T-cell (primary cell): ENCODE measurements at regions of chr4 and their contacts with region 1.

Region 1: GRCh38 chr4:159725571-159725970 is 622.7 kb downstream of the RAPGEF2 start:
- DNase-seq: no peak
- ATAC-seq: no peak
- H3K4me3 ChIP-seq: no peak overlapping the region
- H3K4me3 Mint-ChIP-seq: no peak overlapping the region
- H3K27ac ChIP-seq: no peak overlapping the region
- H3K27ac Mint-ChIP-seq: no peak overlapping the region
- H3K4me1 ChIP-seq: no peaks in the 10 kb centered on the region
- H3K4me1 Mint-ChIP-seq: no peaks in the 10 kb centered on the region
- H3K27me3 ChIP-seq: no peaks in the 10 kb centered on the region
- H3K27me3 Mint-ChIP-seq: no peaks in the 10 kb centered on the region

Region 2: DNA sequence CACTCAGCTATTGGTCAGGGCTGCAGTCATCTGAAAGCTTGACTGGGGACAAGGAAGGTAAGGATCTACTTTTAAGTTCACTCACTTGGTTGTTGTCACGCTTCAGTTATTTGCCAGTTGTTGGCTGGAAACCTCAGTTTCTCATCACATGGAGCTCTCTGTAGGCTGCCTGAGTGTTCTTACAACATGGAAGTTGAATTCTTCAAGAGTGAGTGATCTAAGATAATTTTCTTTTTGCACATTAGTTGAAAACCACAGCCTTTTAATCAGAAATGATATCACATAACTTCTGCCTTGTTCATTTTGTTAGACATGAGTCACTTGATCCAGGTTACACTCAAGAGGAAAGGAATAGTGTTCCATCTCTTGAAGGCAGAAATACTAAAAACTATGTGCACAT is 70.0 kb before region 1 on chr4:
- CTCF ChIA-PET with region 1: no interaction called
- POLR2A ChIA-PET with region 1: no interaction called
- DNase-seq: no peak
- ATAC-seq: no peak
- H3K4me3 ChIP-seq: no peak overlapping the region
- H3K4me3 Mint-ChIP-seq: no peak overlapping the region
- H3K27ac ChIP-seq: no peak overlapping the region
- H3K27ac Mint-ChIP-seq: no peak overlapping the region
- H3K4me1 ChIP-seq: no peaks in the 10 kb centered on the region
- H3K4me1 Mint-ChIP-seq: no peaks in the 10 kb centered on the region
- H3K27me3 ChIP-seq: no peaks in the 10 kb centered on the region
- H3K27me3 Mint-ChIP-seq: no peaks in the 10 kb centered on the region

Region 3: GRCh38 chr4:160009656-160010493 is 284.3 kb after region 1 on chr4:
- CTCF ChIA-PET with region 1: interaction called in 1 of 2 experiments, 10 read pairs
- POLR2A ChIA-PET with region 1: no interaction called
- DNase-seq: no peak
- ATAC-seq: no peak
- H3K4me3 ChIP-seq: no peak overlapping the region
- H3K4me3 Mint-ChIP-seq: no peak overlapping the region
- H3K27ac ChIP-seq: no peak overlapping the region
- H3K27ac Mint-ChIP-seq: no peak overlapping the region
- H3K4me1 ChIP-seq: no peaks in the 10 kb centered on the region
- H3K4me1 Mint-ChIP-seq: no peaks in the 10 kb centered on the region
- H3K27me3 ChIP-seq: no peaks in the 10 kb centered on the region
- H3K27me3 Mint-ChIP-seq: no peaks in the 10 kb centered on the region